Adrenal gland (tissue), 19 donors: ENCODE measurements at regions of chr7 and their contacts with region 1.

Region 1: GRCh38 chr7:47945261-47946001 is 2.8 kb downstream of the PKD1L1 start:
- DNase-seq: peak; percentile 72 to 94 (median 85)
- H3K4me3 ChIP-seq: no peak overlapping the region
- H3K27ac ChIP-seq: no peak overlapping the region
- H3K4me1 ChIP-seq: peaks cover 10 to 17% of the 10 kb centered on the region in 2 donors
- H3K27me3 ChIP-seq: no peaks in the 10 kb centered on the region
- CTCF ChIP-seq: peak; percentile 53 to 85 (median 74)
- POLR2A ChIP-seq: no peak

Region 2: GRCh38 chr7:48109848-48110663 is 164.6 kb after region 1 on chr7:
- intact Hi-C with region 1: loop called (anchors 5 to 10 kb)
- DNase-seq: peak; percentile 61 to 93 (median 80)
- H3K4me3 ChIP-seq: no peak overlapping the region
- H3K27ac ChIP-seq: no peak overlapping the region
- H3K4me1 ChIP-seq: peaks cover 6 to 7% of the 10 kb centered on the region in 2 donors
- H3K27me3 ChIP-seq: no peaks in the 10 kb centered on the region
- CTCF ChIP-seq: peak; percentile 94 to 99 (median 98)
- POLR2A ChIP-seq: no peak

Region 3: GRCh38 chr7:48154792-48155413 is 209.5 kb after region 1 on chr7:
- intact Hi-C with region 1: loop called in 1 of 2 experiments (anchors 5 kb)
- DNase-seq: peak; percentile 48 to 78 (median 62)
- H3K4me3 ChIP-seq: no peak overlapping the region
- H3K27ac ChIP-seq: no peak overlapping the region
- H3K4me1 ChIP-seq: no peaks in the 10 kb centered on the region
- H3K27me3 ChIP-seq: peaks cover 3% of the 10 kb centered on the region
- CTCF ChIP-seq: peak; percentile 61 to 74 (median 68)
- POLR2A ChIP-seq: no peak